ENCODE measurements at regions of chr18 and their contacts with region 1.

Region 1: DNA sequence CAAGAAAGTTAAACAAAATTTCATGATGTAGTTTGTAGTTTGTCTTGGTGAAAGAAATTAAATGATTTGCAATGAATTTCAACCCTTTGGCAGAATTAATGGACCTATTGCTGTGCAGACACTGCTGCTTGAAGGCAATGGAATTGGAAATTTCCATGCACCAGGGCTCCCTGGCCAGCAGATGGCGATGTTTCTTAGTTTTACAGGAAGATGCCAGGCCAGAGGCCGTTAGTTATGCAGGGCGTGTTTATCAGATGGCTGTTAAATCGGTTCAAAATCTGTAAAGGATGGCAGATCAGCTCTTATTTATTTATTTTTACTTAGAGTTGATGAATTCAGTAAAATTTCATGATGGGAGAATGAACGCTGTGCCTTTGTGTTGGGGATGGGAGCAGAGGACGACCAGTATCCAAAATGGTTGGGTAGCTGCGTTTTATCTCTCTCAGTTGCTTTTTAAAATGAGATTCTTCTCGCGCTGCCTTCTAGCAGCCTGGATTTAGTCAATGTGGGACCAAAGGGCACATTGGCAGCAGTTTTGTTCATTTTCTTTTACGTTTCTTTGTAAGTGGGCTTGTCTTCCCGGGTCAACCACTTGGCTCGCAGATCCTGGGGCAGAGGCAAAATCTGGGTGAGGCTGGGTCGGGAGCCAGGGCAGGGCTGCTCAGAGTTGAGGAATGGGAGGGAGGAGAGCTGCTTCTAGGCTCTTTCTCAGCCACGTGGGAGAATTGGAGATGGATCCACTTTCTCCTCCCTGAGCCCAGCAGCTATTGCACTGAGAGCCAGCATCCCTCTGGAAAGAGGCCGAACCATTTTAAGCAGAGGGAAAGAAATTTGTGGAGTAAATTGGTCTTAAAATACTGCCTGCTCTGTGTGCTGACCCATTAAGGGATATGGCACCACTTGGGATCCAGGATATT is 344.0 kb downstream of the PIK3C3 start:
- DNase-seq: no peak
- ATAC-seq: peak; percentile 95
- H3K4me3 ChIP-seq: no peak overlapping the region
- H3K27ac ChIP-seq: no peak overlapping the region
- H3K4me1 ChIP-seq: no peaks in the 10 kb centered on the region
- H3K27me3 ChIP-seq: no peaks in the 10 kb centered on the region
- CTCF ChIP-seq: peak; percentile 85 to 89 (median 85)
- EP300 ChIP-seq: no peak
- POLR2A ChIP-seq: no peak
- RAD21 ChIP-seq: peak; percentile 77

Region 2: GRCh38 chr18:42141439-42141838 is 157.6 kb before region 1 on chr18:
- CTCF ChIA-PET with region 1: interaction called, 13 read pairs
- POLR2A ChIA-PET with region 1: no interaction called
- RAD21 ChIA-PET with region 1: interaction called, 3 read pairs
- SMC1A ChIA-PET with region 1: no interaction called
- in situ Hi-C with region 1: no loop called
- intact Hi-C with region 1: no loop called
- DNase-seq: no peak
- ATAC-seq: no peak
- H3K4me3 ChIP-seq: no peak overlapping the region
- H3K27ac ChIP-seq: no peak overlapping the region
- H3K4me1 ChIP-seq: no peaks in the 10 kb centered on the region
- H3K27me3 ChIP-seq: no peaks in the 10 kb centered on the region
- CTCF ChIP-seq: no peak
- EP300 ChIP-seq: no peak
- POLR2A ChIP-seq: no peak
- RAD21 ChIP-seq: no peak

Region 3: GRCh38 chr18:42274488-42275137 is 24.4 kb before region 1 on chr18:
- CTCF ChIA-PET with region 1: interaction called, 16 read pairs
- POLR2A ChIA-PET with region 1: no interaction called
- RAD21 ChIA-PET with region 1: interaction called, 3 read pairs
- SMC1A ChIA-PET with region 1: interaction called, 5 read pairs
- in situ Hi-C with region 1: no loop called
- intact Hi-C with region 1: no loop called
- DNase-seq: no peak
- ATAC-seq: peak; percentile 92
- H3K4me3 ChIP-seq: no peak overlapping the region
- H3K27ac ChIP-seq: no peak overlapping the region
- H3K4me1 ChIP-seq: no peaks in the 10 kb centered on the region
- H3K27me3 ChIP-seq: no peaks in the 10 kb centered on the region
- CTCF ChIP-seq: peak; percentile 19 to 47 (median 24); a peak in 3 of 6 replicates
- EP300 ChIP-seq: no peak
- POLR2A ChIP-seq: no peak
- RAD21 ChIP-seq: peak; percentile 36; the same call in 1 of the 2 replicates

Region 4: GRCh38 chr18:42310956-42311355 is 11.9 kb after region 1 on chr18:
- CTCF ChIA-PET with region 1: interaction called, 18 read pairs
- POLR2A ChIA-PET with region 1: no interaction called
- RAD21 ChIA-PET with region 1: interaction called, 3 read pairs
- SMC1A ChIA-PET with region 1: interaction called, 3 read pairs
- in situ Hi-C with region 1: no loop called
- intact Hi-C with region 1: no loop called
- DNase-seq: no peak
- ATAC-seq: no peak
- H3K4me3 ChIP-seq: no peak overlapping the region
- H3K27ac ChIP-seq: no peak overlapping the region
- H3K4me1 ChIP-seq: no peaks in the 10 kb centered on the region
- H3K27me3 ChIP-seq: no peaks in the 10 kb centered on the region; a peak in 1 of 4 replicates
- CTCF ChIP-seq: no peak
- EP300 ChIP-seq: no peak
- POLR2A ChIP-seq: no peak
- RAD21 ChIP-seq: no peak

Region 5: GRCh38 chr18:42586601-42587000 is 287.6 kb after region 1 on chr18:
- CTCF ChIA-PET with region 1: no interaction called
- POLR2A ChIA-PET with region 1: no interaction called
- RAD21 ChIA-PET with region 1: no interaction called
- SMC1A ChIA-PET with region 1: no interaction called
- in situ Hi-C with region 1: no loop called
- intact Hi-C with region 1: loop called (anchors 5 kb)
- DNase-seq: no peak
- ATAC-seq: no peak
- H3K4me3 ChIP-seq: no peak overlapping the region
- H3K27ac ChIP-seq: no peak overlapping the region
- H3K4me1 ChIP-seq: no peaks in the 10 kb centered on the region
- H3K27me3 ChIP-seq: no peaks in the 10 kb centered on the region
- CTCF ChIP-seq: no peak
- EP300 ChIP-seq: no peak
- POLR2A ChIP-seq: no peak
- RAD21 ChIP-seq: no peak

Region 6: GRCh38 chr18:43271593-43272432 is 972.8 kb after region 1 on chr18:
- CTCF ChIA-PET with region 1: interaction called, 69 read pairs
- POLR2A ChIA-PET with region 1: no interaction called
- RAD21 ChIA-PET with region 1: interaction called, 9 read pairs
- SMC1A ChIA-PET with region 1: interaction called, 31 read pairs
- in situ Hi-C with region 1: loop called (anchors 5 kb)
- intact Hi-C with region 1: loop called (anchors 1 kb)
- DNase-seq: no peak
- ATAC-seq: peak; percentile 67
- H3K4me3 ChIP-seq: no peak overlapping the region
- H3K27ac ChIP-seq: no peak overlapping the region
- H3K4me1 ChIP-seq: no peaks in the 10 kb centered on the region
- H3K27me3 ChIP-seq: no peaks in the 10 kb centered on the region
- CTCF ChIP-seq: peak; percentile 57 to 70 (median 61)
- EP300 ChIP-seq: no peak
- POLR2A ChIP-seq: no peak
- RAD21 ChIP-seq: peak; percentile 74